ENCODE measurements at regions of chr16 and their contacts with region 1.

Region 1: DNA sequence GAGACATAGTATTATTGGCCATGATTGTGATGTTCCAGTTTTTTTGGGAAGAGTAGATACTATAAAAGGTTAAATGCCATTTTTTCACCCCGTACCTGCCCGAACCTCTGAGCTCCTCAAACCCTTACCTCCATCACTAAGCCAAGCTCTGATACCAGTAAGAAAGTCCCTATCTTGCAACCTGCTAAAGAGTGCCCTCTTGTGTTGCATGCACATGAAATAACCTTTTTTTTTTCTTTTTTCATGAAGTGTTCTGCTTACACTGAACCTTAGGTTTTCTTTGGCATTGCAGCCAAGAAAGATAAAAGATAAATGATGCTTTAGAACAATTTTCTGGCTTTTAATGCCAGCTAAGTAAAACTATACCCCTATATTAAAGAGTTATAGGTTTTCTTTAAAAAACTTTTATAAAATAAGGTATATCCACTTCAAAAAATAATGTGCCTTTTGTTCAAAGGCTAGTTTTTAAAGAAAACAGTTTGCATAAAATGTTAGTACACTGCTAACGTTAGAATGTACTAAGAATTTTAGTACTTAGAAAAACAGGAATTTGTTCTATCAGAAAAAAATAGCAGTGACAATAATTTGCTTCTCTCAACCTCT is 295.3 kb upstream of the PMFBP1 start:
- DNase-seq: no peak
- H3K4me3 ChIP-seq: no peak overlapping the region
- H3K27ac ChIP-seq: no peak overlapping the region
- H3K4me1 ChIP-seq: no peaks in the 10 kb centered on the region
- H3K27me3 ChIP-seq: no peaks in the 10 kb centered on the region
- CTCF ChIP-seq: peak; percentile 66; the same call in 1 of the 2 replicates

Region 2: GRCh38 chr16:71564155-71564967 is 902.9 kb before region 1 on chr16:
- CTCF ChIA-PET with region 1: interaction called, 11 read pairs
- POLR2A ChIA-PET with region 1: no interaction called
- intact Hi-C with region 1: no loop called
- DNase-seq: no peak
- H3K4me3 ChIP-seq: peak overlapping the region; percentile 73
- H3K27ac ChIP-seq: peak overlapping the region; percentile 69
- H3K4me1 ChIP-seq: peaks cover 17% of the 10 kb centered on the region
- H3K27me3 ChIP-seq: no peaks in the 10 kb centered on the region
- CTCF ChIP-seq: no peak

Region 3: GRCh38 chr16:72124761-72125634 is 342.3 kb before region 1 on chr16:
- CTCF ChIA-PET with region 1: no interaction called
- POLR2A ChIA-PET with region 1: no interaction called
- intact Hi-C with region 1: loop called (anchors 2 kb)
- DNase-seq: peak; percentile 39 to 60
- H3K4me3 ChIP-seq: no peak overlapping the region
- H3K27ac ChIP-seq: no peak overlapping the region
- H3K4me1 ChIP-seq: no peaks in the 10 kb centered on the region
- H3K27me3 ChIP-seq: peaks cover 21% of the 10 kb centered on the region
- CTCF ChIP-seq: peak; percentile 87

Region 4: DNA sequence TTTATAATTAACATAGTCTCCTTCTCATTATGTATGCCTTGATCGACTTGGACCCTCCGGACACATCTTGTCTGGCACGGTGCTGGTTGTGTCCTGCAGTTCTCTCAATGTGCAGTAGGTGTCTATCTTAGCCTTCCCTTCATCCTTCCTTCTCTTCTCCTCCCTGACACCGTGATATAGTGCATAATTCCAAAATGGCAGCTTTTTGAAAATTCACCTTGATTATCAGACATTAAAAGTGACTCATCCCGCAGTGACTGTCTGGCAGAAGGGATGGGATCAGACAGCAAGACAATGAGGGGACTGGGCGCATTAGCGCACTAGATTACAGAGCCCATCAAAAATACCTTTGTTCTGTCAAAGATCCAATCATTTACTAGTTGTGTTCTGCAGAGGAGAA is 225.3 kb before region 1 on chr16:
- CTCF ChIA-PET with region 1: no interaction called
- POLR2A ChIA-PET with region 1: no interaction called
- intact Hi-C with region 1: loop called (anchors 1 kb)
- DNase-seq: peak in 1 of 2 experiments; percentile 22
- H3K4me3 ChIP-seq: no peak overlapping the region
- H3K27ac ChIP-seq: no peak overlapping the region
- H3K4me1 ChIP-seq: no peaks in the 10 kb centered on the region
- H3K27me3 ChIP-seq: no peaks in the 10 kb centered on the region
- CTCF ChIP-seq: peak; percentile 79

Region 5: GRCh38 chr16:72400257-72400882 is 66.9 kb before region 1 on chr16:
- CTCF ChIA-PET with region 1: no interaction called
- POLR2A ChIA-PET with region 1: no interaction called
- intact Hi-C with region 1: loop called (anchors 2 kb)
- DNase-seq: peak; percentile 23 to 36
- H3K4me3 ChIP-seq: no peak overlapping the region
- H3K27ac ChIP-seq: no peak overlapping the region
- H3K4me1 ChIP-seq: no peaks in the 10 kb centered on the region
- H3K27me3 ChIP-seq: no peaks in the 10 kb centered on the region
- CTCF ChIP-seq: peak; percentile 92